WTC11 (cell line): ENCODE measurements at regions of chr6 and their contacts with region 1.

Region 1: GRCh38 chr6:154500769-154501577 is 9.5 kb downstream of the CNKSR3 start:
- DNase-seq: no peak
- ATAC-seq: peak; percentile 75
- H3K4me3 Mint-ChIP-seq: no peak overlapping the region
- H3K27ac Mint-ChIP-seq: no peak overlapping the region
- H3K4me1 Mint-ChIP-seq: peaks cover 29% of the 10 kb centered on the region
- H3K27me3 Mint-ChIP-seq: peaks cover 40% of the 10 kb centered on the region
- CTCF ChIP-seq: peak; percentile 40

Region 2: DNA sequence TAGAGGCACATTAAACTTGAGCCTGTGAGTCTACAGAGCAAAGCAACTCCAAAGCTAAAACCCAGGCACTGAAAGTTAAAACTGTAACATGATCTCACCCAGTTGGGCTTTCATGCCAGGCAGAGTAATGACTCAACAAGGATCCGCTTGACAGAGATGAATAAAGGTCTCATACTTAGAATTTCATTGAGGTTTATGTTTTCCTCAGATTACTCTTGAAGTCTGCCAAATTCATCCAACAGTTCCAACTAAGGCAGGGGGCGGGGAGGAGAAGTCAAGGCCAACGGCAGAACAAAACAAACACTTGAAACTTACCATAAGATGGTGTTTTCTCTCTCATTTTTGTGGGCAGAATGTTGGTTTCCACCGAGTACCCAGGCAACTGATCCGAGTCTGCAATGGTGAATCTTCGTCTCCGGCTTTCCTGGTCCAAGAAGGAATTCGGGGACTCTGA is 90.3 kb before region 1 on chr6:
- CTCF ChIA-PET with region 1: no interaction called
- POLR2A ChIA-PET with region 1: no interaction called
- DNase-seq: no peak
- ATAC-seq: peak; percentile 75
- H3K4me3 Mint-ChIP-seq: no peak overlapping the region
- H3K27ac Mint-ChIP-seq: peak overlapping the region; percentile 90
- H3K4me1 Mint-ChIP-seq: peaks cover 19% of the 10 kb centered on the region
- H3K27me3 Mint-ChIP-seq: no peaks in the 10 kb centered on the region
- CTCF ChIP-seq: no peak

Region 3: GRCh38 chr6:154460306-154461071 is 40.5 kb before region 1 on chr6:
- CTCF ChIA-PET with region 1: interaction called, 10 read pairs
- POLR2A ChIA-PET with region 1: no interaction called
- DNase-seq: no peak
- ATAC-seq: no peak
- H3K4me3 Mint-ChIP-seq: no peak overlapping the region
- H3K27ac Mint-ChIP-seq: peak overlapping the region; percentile 19; the same call in 1 of the 2 replicates
- H3K4me1 Mint-ChIP-seq: peaks cover 31% of the 10 kb centered on the region
- H3K27me3 Mint-ChIP-seq: no peaks in the 10 kb centered on the region
- CTCF ChIP-seq: no peak

Region 4: GRCh38 chr6:154478021-154478700 is 22.8 kb before region 1 on chr6:
- CTCF ChIA-PET with region 1: interaction called, 10 read pairs
- POLR2A ChIA-PET with region 1: no interaction called
- DNase-seq: no peak
- ATAC-seq: no peak; the same call in 1 of the 2 replicates
- H3K4me3 Mint-ChIP-seq: no peak overlapping the region
- H3K27ac Mint-ChIP-seq: no peak overlapping the region; the same call in 1 of the 2 replicates
- H3K4me1 Mint-ChIP-seq: peaks cover 11% of the 10 kb centered on the region
- H3K27me3 Mint-ChIP-seq: no peaks in the 10 kb centered on the region
- CTCF ChIP-seq: no peak

Region 5: DNA sequence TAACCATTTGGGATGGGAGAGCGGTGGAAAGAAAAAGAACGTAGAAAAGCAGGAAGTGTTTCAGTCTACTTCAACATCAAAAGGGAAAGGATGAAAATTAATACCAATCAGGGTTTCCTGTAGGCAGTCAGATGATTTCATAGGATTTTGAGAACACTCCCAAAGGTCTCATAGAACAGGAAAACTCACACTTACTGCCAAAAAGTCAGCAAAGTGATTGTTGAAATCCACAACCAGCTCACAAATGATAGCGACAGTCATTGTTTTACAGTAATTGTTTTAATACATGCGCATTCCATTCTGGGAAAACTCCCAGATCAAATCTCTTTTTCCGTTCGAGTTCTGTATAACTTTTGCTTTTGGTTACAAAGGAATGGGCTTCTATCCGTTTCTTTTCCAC is 14.9 kb after region 1 on chr6:
- CTCF ChIA-PET with region 1: interaction called, 38 read pairs
- POLR2A ChIA-PET with region 1: interaction called, 5 read pairs
- DNase-seq: no peak
- ATAC-seq: no peak
- H3K4me3 Mint-ChIP-seq: no peak overlapping the region
- H3K27ac Mint-ChIP-seq: no peak overlapping the region
- H3K4me1 Mint-ChIP-seq: peaks cover 45% of the 10 kb centered on the region
- H3K27me3 Mint-ChIP-seq: peaks cover 33% of the 10 kb centered on the region
- CTCF ChIP-seq: no peak

Region 6: DNA sequence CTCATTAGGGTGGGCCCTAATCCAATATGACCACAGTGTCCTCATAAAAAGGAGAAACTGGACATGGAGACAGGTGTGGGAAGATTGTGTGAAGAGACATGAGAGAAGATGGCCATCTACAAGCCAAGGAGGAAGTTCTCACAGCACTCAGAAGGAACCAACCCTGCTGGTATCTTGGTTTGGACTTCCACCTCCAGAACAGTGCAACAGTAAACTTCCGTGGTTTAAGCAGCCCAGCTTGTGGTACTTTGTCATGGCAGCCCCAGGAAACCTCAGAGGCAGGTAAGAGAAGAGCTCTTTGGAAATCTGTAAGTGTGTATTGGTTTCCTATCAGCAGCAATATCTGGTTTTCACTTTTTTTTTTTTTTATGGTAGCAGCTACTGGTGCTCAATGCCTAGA is 26.0 kb after region 1 on chr6:
- CTCF ChIA-PET with region 1: no interaction called
- POLR2A ChIA-PET with region 1: no interaction called
- DNase-seq: no peak
- ATAC-seq: no peak
- H3K4me3 Mint-ChIP-seq: no peak overlapping the region
- H3K27ac Mint-ChIP-seq: no peak overlapping the region
- H3K4me1 Mint-ChIP-seq: no peaks in the 10 kb centered on the region
- H3K27me3 Mint-ChIP-seq: no peaks in the 10 kb centered on the region
- CTCF ChIP-seq: no peak

Region 7: DNA sequence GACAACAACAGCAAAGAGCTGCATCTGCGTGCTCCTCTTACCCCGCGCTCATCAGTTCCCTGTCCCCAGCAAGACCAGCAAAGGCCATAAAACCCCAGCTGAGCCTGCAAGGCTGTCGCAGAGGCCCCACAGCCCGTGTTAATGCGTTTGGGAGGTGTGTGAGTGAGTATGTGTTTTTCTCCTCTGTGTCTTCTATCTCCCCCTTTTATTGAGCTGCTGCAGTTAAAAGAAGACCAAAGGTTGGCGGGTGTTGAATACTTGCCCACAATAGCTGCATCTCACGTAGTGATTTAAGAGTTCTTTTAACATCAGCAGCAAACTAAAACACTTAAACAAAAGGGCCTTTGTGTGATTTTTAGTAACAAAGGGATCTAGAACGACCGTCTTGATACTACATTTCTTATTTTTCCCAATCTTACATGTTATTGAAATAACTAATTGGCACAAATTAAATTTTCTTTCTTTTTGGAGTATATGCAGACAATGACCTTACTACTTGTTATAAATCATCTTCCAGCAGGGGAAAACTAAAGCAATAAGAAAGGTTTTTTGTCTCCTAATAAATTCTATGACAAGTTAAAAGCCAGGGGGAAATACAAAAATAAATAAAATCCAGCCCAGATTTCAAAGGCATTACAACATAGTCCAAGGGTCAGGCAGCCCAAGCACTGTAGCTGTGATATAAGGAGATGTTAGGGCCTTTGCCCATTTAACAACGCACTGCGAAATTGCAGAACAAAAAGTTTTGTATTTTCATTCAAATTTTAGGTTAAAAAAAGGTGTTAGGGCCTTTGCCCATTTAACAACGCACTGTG is 36.7 kb after region 1 on chr6:
- CTCF ChIA-PET with region 1: interaction called, 19 read pairs
- POLR2A ChIA-PET with region 1: no interaction called
- DNase-seq: no peak
- ATAC-seq: peak; percentile 50
- H3K4me3 Mint-ChIP-seq: no peak overlapping the region
- H3K27ac Mint-ChIP-seq: no peak overlapping the region
- H3K4me1 Mint-ChIP-seq: peaks cover 39% of the 10 kb centered on the region
- H3K27me3 Mint-ChIP-seq: peaks cover 54% of the 10 kb centered on the region
- CTCF ChIP-seq: no peak

Region 8: GRCh38 chr6:154543628-154544027 is 42.7 kb after region 1 on chr6:
- CTCF ChIA-PET with region 1: interaction called, 19 read pairs
- POLR2A ChIA-PET with region 1: no interaction called
- DNase-seq: no peak
- ATAC-seq: no peak
- H3K4me3 Mint-ChIP-seq: no peak overlapping the region
- H3K27ac Mint-ChIP-seq: no peak overlapping the region
- H3K4me1 Mint-ChIP-seq: peaks cover 36% of the 10 kb centered on the region
- H3K27me3 Mint-ChIP-seq: peaks cover 73% of the 10 kb centered on the region
- CTCF ChIP-seq: no peak